Natural killer cell (primary cell): ENCODE measurements at regions of chr6 and their contacts with region 1.

Region 1: DNA sequence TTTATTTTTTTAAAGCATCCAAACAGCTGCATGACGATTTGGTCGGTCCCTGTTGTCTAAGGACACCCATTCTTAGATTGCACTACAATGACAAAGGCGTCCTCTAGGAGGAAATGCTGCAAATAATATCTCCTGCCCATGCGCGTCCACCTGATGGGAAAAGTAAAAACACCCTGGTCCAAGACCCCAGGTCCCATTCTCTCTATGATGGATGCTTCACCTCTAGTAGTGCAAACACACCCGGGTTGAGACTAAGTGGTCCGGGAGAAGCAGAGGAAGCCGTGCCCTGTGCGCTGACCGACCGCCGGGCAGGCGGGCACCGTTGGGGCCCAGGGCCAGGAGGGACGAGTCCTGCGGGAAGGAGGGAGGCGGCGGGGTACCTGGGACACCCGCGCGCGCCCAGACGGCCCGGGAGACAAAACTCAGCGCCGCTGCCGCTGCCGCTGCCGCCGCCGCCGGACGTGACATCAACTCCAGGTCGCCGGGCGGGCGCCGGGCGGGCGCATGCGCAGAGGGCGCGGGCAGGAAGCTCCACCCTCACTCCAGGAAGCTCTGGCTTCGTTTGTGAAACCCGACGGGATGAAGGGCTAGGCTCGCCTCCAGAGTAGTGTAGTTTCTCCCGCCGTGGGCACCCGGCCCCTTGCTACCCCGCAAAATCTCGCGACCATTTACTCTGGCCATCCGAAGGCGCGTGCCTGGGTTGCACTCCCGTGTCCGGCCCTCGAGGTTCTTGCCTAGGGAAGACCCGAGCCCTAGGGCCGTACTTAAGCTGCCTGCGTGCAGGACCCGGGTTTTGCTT is at the start of gene TBC1D7:
- DNase-seq: peak; percentile 94 to 95
- ATAC-seq: peak; percentile 89 to 95 (median 90)
- H3K4me3 ChIP-seq: peak within 1 kb of the TSS; percentile 74
- H3K4me3 Mint-ChIP-seq: peak within 1 kb of the TSS; percentile 92
- H3K27ac ChIP-seq: peak within 1 kb of the TSS; percentile 90
- H3K27ac Mint-ChIP-seq: peak within 1 kb of the TSS; percentile 93 to 95
- H3K4me1 ChIP-seq: peaks cover 8% of the 10 kb centered on the region
- H3K4me1 Mint-ChIP-seq: peaks cover 14 to 20% of the 10 kb centered on the region in 2 donors
- H3K27me3 ChIP-seq: no peaks in the 10 kb centered on the region
- H3K27me3 Mint-ChIP-seq: no peaks in the 10 kb centered on the region
- CTCF ChIP-seq: no peak
- total RNA-seq, gene TBC1D7: 20.1 to 29.7 (median 24.3) TPM

Region 2: DNA sequence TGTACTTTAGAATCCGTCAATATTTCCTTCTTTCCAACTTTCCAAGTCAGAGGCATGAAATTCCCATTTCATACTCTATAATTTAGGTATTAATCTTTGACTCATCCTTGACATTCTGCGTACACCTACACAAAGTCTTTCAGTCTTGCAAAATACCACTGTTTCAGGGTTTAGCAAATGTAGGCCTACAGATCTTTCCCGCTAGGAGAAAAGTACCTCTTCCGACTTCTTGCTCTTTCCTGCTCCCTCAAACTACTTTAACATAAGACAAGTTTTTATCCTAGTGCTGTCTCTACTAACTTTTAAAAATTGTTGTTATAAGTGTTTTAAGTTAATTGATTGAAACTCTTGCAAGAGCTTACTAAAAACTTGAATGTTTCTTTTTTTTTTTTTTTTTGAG is 630.0 kb before region 1 on chr6:
- intact Hi-C with region 1: no loop called
- DNase-seq: no peak
- ATAC-seq: no peak
- H3K4me3 ChIP-seq: no peak overlapping the region
- H3K4me3 Mint-ChIP-seq: no peak overlapping the region
- H3K27ac ChIP-seq: no peak overlapping the region
- H3K27ac Mint-ChIP-seq: no peak overlapping the region
- H3K4me1 ChIP-seq: no peaks in the 10 kb centered on the region
- H3K4me1 Mint-ChIP-seq: no peaks in the 10 kb centered on the region
- H3K27me3 ChIP-seq: no peaks in the 10 kb centered on the region
- H3K27me3 Mint-ChIP-seq: peaks cover 3 to 29% of the 10 kb centered on the region in 2 donors
- CTCF ChIP-seq: no peak

Region 3: GRCh38 chr6:12911387-12911960 is 416.8 kb before region 1 on chr6:
- intact Hi-C with region 1: loop called (anchors 5 kb)
- DNase-seq: peak in 1 of 2 donors; percentile 30
- ATAC-seq: no peak
- H3K4me3 ChIP-seq: no peak overlapping the region
- H3K4me3 Mint-ChIP-seq: no peak overlapping the region
- H3K27ac ChIP-seq: no peak overlapping the region
- H3K27ac Mint-ChIP-seq: no peak overlapping the region
- H3K4me1 ChIP-seq: no peaks in the 10 kb centered on the region
- H3K4me1 Mint-ChIP-seq: no peaks in the 10 kb centered on the region
- H3K27me3 ChIP-seq: no peaks in the 10 kb centered on the region
- H3K27me3 Mint-ChIP-seq: peaks cover 11 to 25% of the 10 kb centered on the region in 2 donors
- CTCF ChIP-seq: peak; percentile 23

Region 4: GRCh38 chr6:13296536-13296997 is 31.7 kb before region 1 on chr6:
- intact Hi-C with region 1: no loop called
- DNase-seq: no peak
- ATAC-seq: no peak
- H3K4me3 ChIP-seq: no peak overlapping the region
- H3K4me3 Mint-ChIP-seq: no peak overlapping the region
- H3K27ac ChIP-seq: no peak overlapping the region
- H3K27ac Mint-ChIP-seq: no peak overlapping the region
- H3K4me1 ChIP-seq: no peaks in the 10 kb centered on the region
- H3K4me1 Mint-ChIP-seq: peaks cover 5 to 8% of the 10 kb centered on the region in 2 donors
- H3K27me3 ChIP-seq: no peaks in the 10 kb centered on the region
- H3K27me3 Mint-ChIP-seq: no peaks in the 10 kb centered on the region
- CTCF ChIP-seq: no peak

Region 5: GRCh38 chr6:13614926-13615798 is 286.9 kb after region 1 on chr6 and contains the start of gene NOL7:
- intact Hi-C with region 1: loop called (anchors 5 kb)
- DNase-seq: peak; percentile 100
- ATAC-seq: peak; percentile 93 to 99 (median 94)
- H3K4me3 ChIP-seq: peak within 1 kb of the TSS; percentile 91
- H3K4me3 Mint-ChIP-seq: peak within 1 kb of the TSS; percentile 99
- H3K27ac ChIP-seq: peak within 1 kb of the TSS; percentile 76
- H3K27ac Mint-ChIP-seq: peak within 1 kb of the TSS; percentile 94 to 99
- H3K4me1 ChIP-seq: peaks cover 17% of the 10 kb centered on the region
- H3K4me1 Mint-ChIP-seq: peaks cover 35 to 37% of the 10 kb centered on the region in 2 donors
- H3K27me3 ChIP-seq: no peaks in the 10 kb centered on the region
- H3K27me3 Mint-ChIP-seq: no peaks in the 10 kb centered on the region
- CTCF ChIP-seq: peak; percentile 82
- total RNA-seq, gene NOL7: 24.7 to 31.3 (median 29.6) TPM